Activated CD4-positive, alpha-beta T cell treated with anti-CD3 and anti-CD28 coated beads for 36 hours (primary cell): ENCODE measurements at regions of chr4 and their contacts with region 1.

Region 1: DNA sequence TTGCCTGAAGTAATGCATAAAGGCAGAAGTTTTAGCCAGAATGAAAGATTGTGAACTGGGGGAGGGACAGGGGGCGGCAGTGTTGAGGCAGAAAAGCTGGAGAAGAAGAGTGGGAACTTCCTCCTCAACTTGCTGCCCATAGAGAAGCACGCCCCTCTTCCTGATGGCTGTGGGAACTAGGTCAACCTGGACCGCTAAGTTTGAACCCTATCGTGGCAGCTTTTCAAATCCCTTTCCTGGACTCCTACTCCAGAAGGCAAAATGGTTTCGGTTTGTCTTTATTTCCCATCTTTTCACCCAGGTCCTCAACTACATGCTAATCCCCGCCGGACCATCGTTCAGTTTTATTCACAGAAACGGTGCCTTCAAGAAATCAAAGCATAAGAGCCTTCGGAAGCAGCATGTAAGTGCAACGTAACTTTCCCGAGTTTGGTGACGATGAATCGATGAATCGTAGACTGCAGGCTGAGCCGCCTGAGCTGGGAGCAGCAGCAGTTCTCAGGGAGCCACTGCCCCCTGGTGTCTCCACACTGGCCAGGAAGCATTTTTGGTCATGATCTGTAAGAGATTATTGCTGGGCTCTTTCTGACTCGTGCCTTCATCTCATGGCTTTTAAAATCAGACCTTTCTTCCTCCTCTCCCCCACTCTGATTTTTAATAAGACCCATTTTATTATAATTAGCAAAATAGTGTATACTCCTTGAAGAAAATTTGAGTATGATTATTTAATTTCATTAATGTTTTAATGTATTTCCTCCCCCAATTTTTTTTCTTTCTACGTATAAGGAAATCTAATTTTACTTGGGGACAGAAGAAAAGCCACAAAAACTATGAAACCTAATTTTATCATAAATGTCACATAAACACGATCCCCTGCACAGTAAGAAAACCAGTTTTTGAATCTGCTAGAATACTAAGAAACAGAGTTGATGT is 21.4 kb downstream of the SPINK2 start:
- DNase-seq: peak; percentile 93
- ATAC-seq: peak; percentile 95
- H3K4me3 Mint-ChIP-seq: peak overlapping the region; percentile 85
- H3K27ac Mint-ChIP-seq: peak overlapping the region; percentile 85
- H3K4me1 Mint-ChIP-seq: peaks cover 33% of the 10 kb centered on the region
- H3K27me3 Mint-ChIP-seq: no peaks in the 10 kb centered on the region

Region 2: GRCh38 chr4:56544573-56545131 is 255.4 kb before region 1 on chr4:
- CTCF ChIA-PET with region 1: interaction called, 4 read pairs
- POLR2A ChIA-PET with region 1: no interaction called
- intact Hi-C with region 1: loop called in 1 of 2 experiments (anchors 1 kb)
- DNase-seq: peak; percentile 92
- ATAC-seq: peak; percentile 100
- H3K4me3 Mint-ChIP-seq: peak overlapping the region; percentile 54
- H3K27ac Mint-ChIP-seq: no peak overlapping the region
- H3K4me1 Mint-ChIP-seq: peaks cover 16% of the 10 kb centered on the region
- H3K27me3 Mint-ChIP-seq: peaks cover 3% of the 10 kb centered on the region

Region 3: DNA sequence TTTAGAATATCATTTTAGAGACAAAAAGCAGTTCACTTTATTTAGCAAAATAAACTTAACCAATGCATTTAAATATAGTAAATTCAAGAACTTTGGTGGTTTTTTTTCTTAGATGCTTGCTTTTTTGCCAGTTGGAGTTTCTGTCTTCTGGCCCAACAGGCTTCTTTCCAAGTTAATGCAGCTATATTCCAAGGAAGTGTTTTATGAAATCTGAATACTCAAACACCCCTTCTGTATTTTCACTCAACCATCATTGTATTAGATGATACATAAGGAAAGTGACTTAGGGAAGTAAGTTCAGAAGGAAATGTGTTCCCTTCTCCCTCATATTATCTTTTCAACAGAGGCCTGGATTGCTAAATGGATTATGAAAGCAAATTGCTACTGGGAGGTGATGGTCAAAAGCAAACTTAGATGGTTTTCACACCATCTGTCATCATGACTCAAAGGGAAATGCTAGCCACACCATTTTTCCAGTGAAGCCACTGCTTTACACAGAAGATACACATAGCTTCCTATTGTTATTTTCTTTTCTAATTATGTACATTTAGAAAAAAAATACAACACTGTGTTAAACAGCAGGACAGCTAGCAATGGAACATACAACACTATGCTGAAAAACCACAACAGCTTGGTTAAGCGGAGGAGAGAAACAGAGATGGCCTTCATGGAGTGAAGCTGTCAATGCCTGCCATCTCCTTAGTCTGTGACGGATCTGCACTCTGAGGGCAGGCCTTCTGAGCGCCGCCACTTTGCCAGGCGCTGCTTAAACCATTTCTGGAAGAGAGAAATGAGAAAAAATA is 151.9 kb before region 1 on chr4:
- CTCF ChIA-PET with region 1: interaction called, 7 read pairs
- POLR2A ChIA-PET with region 1: interaction called, 4 read pairs
- intact Hi-C with region 1: loop called in 1 of 2 experiments (anchors 2 kb)
- DNase-seq: peak; percentile 39
- ATAC-seq: peak; percentile 27
- H3K4me3 Mint-ChIP-seq: no peak overlapping the region
- H3K27ac Mint-ChIP-seq: peak overlapping the region; percentile 70
- H3K4me1 Mint-ChIP-seq: peaks cover 61% of the 10 kb centered on the region
- H3K27me3 Mint-ChIP-seq: no peaks in the 10 kb centered on the region

Region 4: GRCh38 chr4:56681158-56681852 is 118.8 kb before region 1 on chr4 and contains the start of gene HOPX:
- CTCF ChIA-PET with region 1: interaction called, 11 read pairs
- POLR2A ChIA-PET with region 1: no interaction called
- intact Hi-C with region 1: loop called (anchors 1 to 5 kb)
- DNase-seq: peak; percentile 90
- ATAC-seq: peak; percentile 84
- H3K4me3 Mint-ChIP-seq: peak within 1 kb of the TSS; percentile 51
- H3K27ac Mint-ChIP-seq: peak within 1 kb of the TSS; percentile 61
- H3K4me1 Mint-ChIP-seq: peaks cover 34% of the 10 kb centered on the region
- H3K27me3 Mint-ChIP-seq: peaks cover 28% of the 10 kb centered on the region
- total RNA-seq, gene HOPX: 56.3 to 83.9 TPM

Region 5: DNA sequence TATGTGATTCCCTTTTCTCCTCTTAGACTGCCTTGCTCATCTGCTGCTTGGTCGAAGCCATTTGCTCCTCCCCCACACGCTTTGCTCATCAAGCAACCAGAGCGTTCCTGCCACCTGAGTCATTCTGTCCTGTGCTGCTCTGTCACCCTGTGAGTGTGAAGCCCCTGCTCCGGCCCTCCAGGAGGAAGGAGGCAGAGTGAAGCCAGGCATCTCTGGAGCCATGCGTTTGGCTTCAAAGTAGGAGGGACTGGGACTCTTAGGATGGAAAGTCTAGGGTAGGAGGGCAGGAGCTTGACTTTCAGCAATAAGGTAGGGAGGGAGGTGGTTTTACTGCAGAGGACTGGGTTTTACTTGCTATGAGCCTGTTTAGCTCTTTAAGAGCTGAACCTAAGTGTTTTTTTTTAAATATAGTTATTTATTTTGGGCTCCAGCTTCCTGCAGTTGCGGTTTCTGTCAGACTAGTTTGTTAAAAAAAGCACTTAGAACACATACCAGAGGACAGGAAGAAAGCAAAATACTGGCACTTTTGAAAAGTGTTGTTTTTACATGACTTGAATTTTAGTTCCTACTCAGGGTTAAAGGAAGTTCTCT is 42.2 kb before region 1 on chr4:
- CTCF ChIA-PET with region 1: interaction called, 15 read pairs
- POLR2A ChIA-PET with region 1: interaction called, 5 read pairs
- intact Hi-C with region 1: loop called (anchors 2 kb)
- DNase-seq: peak; percentile 92
- ATAC-seq: peak; percentile 98
- H3K4me3 Mint-ChIP-seq: peak overlapping the region; percentile 49
- H3K27ac Mint-ChIP-seq: peak overlapping the region; percentile 91
- H3K4me1 Mint-ChIP-seq: peaks cover 59% of the 10 kb centered on the region
- H3K27me3 Mint-ChIP-seq: no peaks in the 10 kb centered on the region

Region 6: DNA sequence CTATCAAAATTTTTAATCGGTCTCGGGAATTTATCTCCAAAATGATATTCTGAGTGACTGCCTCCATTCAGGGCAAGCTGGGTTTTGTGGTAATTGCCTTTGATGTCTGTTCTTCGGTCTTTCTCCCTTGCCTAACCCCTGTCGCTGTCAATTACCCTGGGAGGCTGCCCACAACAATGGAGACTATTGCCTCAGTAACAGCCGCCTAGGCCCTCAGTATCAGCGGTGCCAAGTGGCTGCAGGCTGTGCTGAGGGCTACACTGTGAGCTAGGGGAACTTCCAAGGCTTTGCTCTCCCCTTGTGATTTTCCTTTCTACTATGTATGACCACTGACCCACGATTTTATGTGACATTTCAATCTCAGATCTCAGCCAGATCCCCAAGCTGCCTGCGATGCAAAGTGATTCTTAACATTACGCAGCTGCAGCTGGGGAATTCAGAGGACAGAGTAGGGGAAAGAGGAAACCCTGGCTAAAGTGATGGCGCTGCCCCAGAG is 71.3 kb after region 1 on chr4:
- CTCF ChIA-PET with region 1: no interaction called
- POLR2A ChIA-PET with region 1: no interaction called
- intact Hi-C with region 1: no loop called
- DNase-seq: no peak
- ATAC-seq: no peak
- H3K4me3 Mint-ChIP-seq: no peak overlapping the region
- H3K27ac Mint-ChIP-seq: no peak overlapping the region
- H3K4me1 Mint-ChIP-seq: peaks cover 7% of the 10 kb centered on the region
- H3K27me3 Mint-ChIP-seq: no peaks in the 10 kb centered on the region